GM12878 (cell line): ENCODE measurements at regions of chr17 and their contacts with region 1.

Region 1: DNA sequence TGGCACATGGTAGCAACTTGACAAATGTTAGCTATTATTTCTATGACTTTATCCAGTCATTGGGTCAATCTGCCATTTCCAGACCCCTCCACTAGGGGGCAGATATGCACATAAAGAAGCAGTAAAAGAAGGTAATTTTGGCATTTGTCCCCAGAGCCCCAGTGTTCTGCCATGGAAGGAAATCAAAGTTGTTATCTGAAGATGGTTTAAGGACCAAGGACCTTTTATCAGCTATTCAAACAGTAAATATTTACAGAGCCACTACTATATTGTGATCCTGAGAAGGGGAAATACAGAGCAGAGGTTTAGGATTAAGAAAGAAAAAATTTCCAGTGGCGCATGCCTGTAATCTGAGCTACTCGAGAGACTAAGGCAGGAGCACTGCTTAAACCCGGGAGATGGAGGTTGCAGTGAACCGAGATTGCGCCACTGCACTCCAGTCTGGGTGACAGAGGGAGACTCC is 20.0 kb downstream of the TRAF4 start:
- DNase-seq: no peak
- ATAC-seq: peak; percentile 81
- H3K4me3 ChIP-seq: no peak overlapping the region
- H3K27ac ChIP-seq: peak overlapping the region; percentile 48
- H3K4me1 ChIP-seq: peaks cover 15% of the 10 kb centered on the region
- H3K27me3 ChIP-seq: no peaks in the 10 kb centered on the region
- CTCF ChIP-seq: peak; percentile 78 to 94 (median 82)
- EP300 ChIP-seq: no peak
- POLR2A ChIP-seq: no peak
- RAD21 ChIP-seq: peak; percentile 87

Region 2: GRCh38 chr17:28726226-28727130 is 37.4 kb before region 1 on chr17 and contains the start of gene TLCD1:
- CTCF ChIA-PET with region 1: interaction called, 147 read pairs
- POLR2A ChIA-PET with region 1: interaction called, 19 read pairs
- RAD21 ChIA-PET with region 1: interaction called, 109 read pairs
- SMC1A ChIA-PET with region 1: interaction called, 60 read pairs
- in situ Hi-C with region 1: no loop called
- intact Hi-C with region 1: loop called (anchors 1 kb)
- DNase-seq: no peak
- ATAC-seq: peak; percentile 44
- H3K4me3 ChIP-seq: peak within 1 kb of the TSS; percentile 72
- H3K27ac ChIP-seq: peak within 1 kb of the TSS; percentile 94
- H3K4me1 ChIP-seq: peaks cover 23% of the 10 kb centered on the region
- H3K27me3 ChIP-seq: no peaks in the 10 kb centered on the region
- CTCF ChIP-seq: peak; percentile 99 to 100 (median 99); a peak in 5 of 6 replicates
- EP300 ChIP-seq: no peak
- POLR2A ChIP-seq: no peak; the same call in 1 of the 2 replicates
- RAD21 ChIP-seq: peak; percentile 98
- polyA plus RNA-seq, gene TLCD1: 2.9 to 7.1 TPM

Region 3: GRCh38 chr17:28812091-28812747 is 48.4 kb after region 1 on chr17:
- CTCF ChIA-PET with region 1: interaction called, 40 read pairs
- POLR2A ChIA-PET with region 1: no interaction called
- RAD21 ChIA-PET with region 1: interaction called, 23 read pairs
- SMC1A ChIA-PET with region 1: interaction called, 10 read pairs
- in situ Hi-C with region 1: no loop called
- intact Hi-C with region 1: loop called (anchors 5 kb)
- DNase-seq: peak; percentile 78
- ATAC-seq: peak; percentile 100
- H3K4me3 ChIP-seq: peak overlapping the region; percentile 75
- H3K27ac ChIP-seq: peak overlapping the region; percentile 74
- H3K4me1 ChIP-seq: peaks cover 18% of the 10 kb centered on the region
- H3K27me3 ChIP-seq: no peaks in the 10 kb centered on the region
- CTCF ChIP-seq: no peak
- EP300 ChIP-seq: no peak
- POLR2A ChIP-seq: peak; percentile 70; the same call in 1 of the 2 replicates
- RAD21 ChIP-seq: no peak

Region 4: DNA sequence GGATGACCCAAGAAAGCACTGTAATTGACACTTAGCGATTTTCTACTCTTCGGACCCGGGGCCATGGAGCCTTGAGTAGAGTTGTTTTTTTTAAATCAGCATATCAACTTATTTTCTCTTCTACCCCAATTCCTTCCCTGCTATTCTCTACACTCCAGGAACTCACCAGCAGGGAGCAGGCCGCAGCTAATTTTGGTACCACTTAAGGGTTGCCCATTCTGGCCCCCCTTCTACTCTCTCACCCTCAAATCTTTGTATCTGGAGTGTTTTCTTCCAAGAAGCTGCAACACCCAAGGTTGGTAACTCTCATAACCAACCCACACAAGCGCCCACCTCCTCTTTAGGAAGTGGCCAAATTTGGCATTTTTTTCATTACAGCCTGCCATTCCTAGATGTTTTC is 85.4 kb after region 1 on chr17:
- CTCF ChIA-PET with region 1: interaction called, 49 read pairs
- POLR2A ChIA-PET with region 1: no interaction called
- RAD21 ChIA-PET with region 1: interaction called, 12 read pairs
- SMC1A ChIA-PET with region 1: interaction called, 6 read pairs
- in situ Hi-C with region 1: no loop called
- intact Hi-C with region 1: loop called (anchors 5 kb)
- DNase-seq: no peak
- ATAC-seq: peak; percentile 91
- H3K4me3 ChIP-seq: no peak overlapping the region
- H3K27ac ChIP-seq: no peak overlapping the region
- H3K4me1 ChIP-seq: peaks cover 3% of the 10 kb centered on the region
- H3K27me3 ChIP-seq: no peaks in the 10 kb centered on the region
- CTCF ChIP-seq: peak; percentile 7 to 57 (median 19); a peak in 3 of 6 replicates
- EP300 ChIP-seq: no peak
- POLR2A ChIP-seq: no peak
- RAD21 ChIP-seq: peak; percentile 53

Region 5: GRCh38 chr17:28889996-28890395 is 126.2 kb after region 1 on chr17:
- CTCF ChIA-PET with region 1: interaction called, 25 read pairs
- POLR2A ChIA-PET with region 1: interaction called, 3 read pairs
- RAD21 ChIA-PET with region 1: interaction called, 8 read pairs
- SMC1A ChIA-PET with region 1: interaction called, 15 read pairs
- in situ Hi-C with region 1: no loop called
- intact Hi-C with region 1: no loop called
- DNase-seq: no peak
- ATAC-seq: no peak
- H3K4me3 ChIP-seq: no peak overlapping the region
- H3K27ac ChIP-seq: no peak overlapping the region
- H3K4me1 ChIP-seq: peaks cover 59% of the 10 kb centered on the region
- H3K27me3 ChIP-seq: no peaks in the 10 kb centered on the region
- CTCF ChIP-seq: no peak
- EP300 ChIP-seq: no peak
- POLR2A ChIP-seq: no peak
- RAD21 ChIP-seq: no peak

Region 6: GRCh38 chr17:28916302-28916934 is 152.6 kb after region 1 on chr17:
- CTCF ChIA-PET with region 1: interaction called, 175 read pairs
- POLR2A ChIA-PET with region 1: no interaction called
- RAD21 ChIA-PET with region 1: interaction called, 23 read pairs
- SMC1A ChIA-PET with region 1: interaction called, 40 read pairs
- in situ Hi-C with region 1: no loop called
- intact Hi-C with region 1: loop called (anchors 1 kb)
- DNase-seq: no peak
- ATAC-seq: peak; percentile 89
- H3K4me3 ChIP-seq: no peak overlapping the region
- H3K27ac ChIP-seq: no peak overlapping the region
- H3K4me1 ChIP-seq: no peaks in the 10 kb centered on the region
- H3K27me3 ChIP-seq: no peaks in the 10 kb centered on the region
- CTCF ChIP-seq: peak; percentile 55 to 59 (median 57)
- EP300 ChIP-seq: no peak
- POLR2A ChIP-seq: no peak
- RAD21 ChIP-seq: peak; percentile 58

Region 7: DNA sequence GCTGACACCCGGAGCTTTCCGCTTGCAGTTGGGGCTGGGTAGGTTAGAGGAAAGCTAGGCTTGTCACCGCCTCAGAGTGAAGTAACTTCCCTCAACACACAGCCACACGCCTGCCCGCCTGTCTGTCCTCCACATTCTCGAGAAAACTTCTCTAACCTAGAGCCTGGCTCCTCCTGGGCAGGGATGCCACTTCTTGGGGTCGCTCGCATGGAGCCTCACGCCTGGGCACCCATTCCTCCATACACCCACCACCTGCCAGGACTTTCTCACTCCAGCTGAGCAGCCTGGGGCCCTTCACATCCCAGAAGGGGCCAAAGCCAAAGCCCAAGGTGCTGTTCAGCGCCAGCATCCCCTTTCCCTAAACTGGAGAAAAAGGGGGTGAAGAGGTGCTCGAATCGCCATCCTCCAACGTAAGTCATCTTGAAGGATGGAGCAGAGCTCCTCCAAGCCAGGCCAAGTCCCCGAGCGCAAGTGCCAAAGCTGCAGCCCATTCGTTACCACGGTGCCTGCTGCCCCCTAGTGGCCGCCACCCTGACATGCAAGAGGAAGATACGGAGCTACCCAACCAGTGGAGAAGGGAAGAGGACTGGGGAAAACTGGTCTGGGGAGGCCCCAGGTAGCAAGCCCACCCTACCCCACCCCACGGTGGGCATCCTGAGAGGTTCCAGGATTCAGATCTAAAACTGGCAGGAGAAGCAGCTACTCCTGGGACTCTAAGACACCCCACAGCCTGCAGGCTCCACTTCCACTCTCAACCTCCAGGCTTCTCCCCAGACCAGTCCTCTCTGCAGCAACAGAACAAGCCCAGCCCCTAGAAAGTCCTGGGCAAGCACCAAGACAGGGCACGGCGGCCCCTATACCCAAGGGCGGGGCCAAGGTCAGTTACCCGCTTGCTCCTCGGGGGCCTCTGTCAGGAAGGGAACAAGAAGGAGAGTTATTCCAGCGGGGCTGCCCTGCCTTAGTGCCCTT is 353.3 kb after region 1 on chr17:
- CTCF ChIA-PET with region 1: interaction called, 12 read pairs
- POLR2A ChIA-PET with region 1: no interaction called
- RAD21 ChIA-PET with region 1: interaction called, 7 read pairs
- SMC1A ChIA-PET with region 1: no interaction called
- in situ Hi-C with region 1: no loop called
- intact Hi-C with region 1: no loop called
- DNase-seq: peak; percentile 5
- ATAC-seq: peak; percentile 89
- H3K4me3 ChIP-seq: no peak overlapping the region
- H3K27ac ChIP-seq: no peak overlapping the region
- H3K4me1 ChIP-seq: no peaks in the 10 kb centered on the region
- H3K27me3 ChIP-seq: no peaks in the 10 kb centered on the region
- CTCF ChIP-seq: peak; percentile 90 to 95 (median 92)
- EP300 ChIP-seq: no peak
- POLR2A ChIP-seq: no peak
- RAD21 ChIP-seq: peak; percentile 70